Activated T-helper 1 cell treated with anti-CD3 and anti-CD28 coated beads, Interleukin-12 subunit alpha, Interleukin-12 subunit beta, Interleukin-2, Interleukin-4 antibody, amounts not matched to agents 30 ng/mL and 10 ng/mL and 1 ng/mL, durations not matched to agents 14 hours and 24 hours and 36 hours (primary cell): ENCODE measurements at regions of chr9 and their contacts with region 1.

Region 1: GRCh38 chr9:113614843-113615648 is 151.5 kb downstream of the RGS3 start:
- DNase-seq: no peak
- H3K4me3 Mint-ChIP-seq: peak overlapping the region; percentile 64
- H3K27ac Mint-ChIP-seq: peak overlapping the region; percentile 76
- H3K4me1 Mint-ChIP-seq: peaks cover 42% of the 10 kb centered on the region
- H3K27me3 Mint-ChIP-seq: peaks cover 2% of the 10 kb centered on the region

Region 2: GRCh38 chr9:113548221-113549041 is 66.6 kb before region 1 on chr9:
- intact Hi-C with region 1: loop called (anchors 2 kb)
- DNase-seq: no peak
- H3K4me3 Mint-ChIP-seq: peak overlapping the region; percentile 23
- H3K27ac Mint-ChIP-seq: peak overlapping the region; percentile 92
- H3K4me1 Mint-ChIP-seq: peaks cover 26% of the 10 kb centered on the region
- H3K27me3 Mint-ChIP-seq: no peaks in the 10 kb centered on the region

Region 3: DNA sequence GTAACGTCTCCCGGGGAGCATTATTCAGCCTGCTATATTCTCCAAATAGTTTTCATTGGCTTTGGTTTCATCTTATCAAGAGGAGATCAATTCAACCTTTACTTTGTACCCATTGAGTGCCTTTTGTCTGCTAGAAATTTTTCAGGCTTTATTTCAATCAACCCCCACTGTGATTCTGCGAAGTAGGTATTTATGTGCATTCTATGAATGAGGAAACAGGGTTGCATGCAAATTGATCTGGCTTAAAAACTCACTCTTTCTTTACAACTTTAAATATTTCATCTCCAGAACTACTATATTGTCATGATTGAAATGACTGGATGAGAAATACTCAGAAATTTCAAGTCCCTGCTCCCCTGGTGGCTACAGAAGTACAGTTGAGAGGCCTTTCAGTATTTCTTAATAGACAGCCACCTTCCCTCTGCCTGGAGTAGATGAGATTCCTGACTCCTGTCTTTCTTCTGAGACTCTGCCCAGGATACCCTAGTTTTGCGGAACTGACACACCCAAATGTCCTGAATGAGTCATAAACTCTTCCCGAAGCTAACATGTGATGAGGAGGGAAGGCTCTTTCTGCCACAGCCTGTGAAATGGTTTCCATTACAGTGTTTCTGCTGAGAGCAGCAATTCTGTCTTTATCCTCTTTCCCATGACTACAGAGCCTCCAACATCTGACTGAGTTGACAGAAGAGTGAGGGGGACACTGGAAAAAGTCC is 1555.5 kb after region 1 on chr9:
- intact Hi-C with region 1: no loop called
- DNase-seq: no peak
- H3K4me3 Mint-ChIP-seq: no peak overlapping the region
- H3K27ac Mint-ChIP-seq: no peak overlapping the region
- H3K4me1 Mint-ChIP-seq: no peaks in the 10 kb centered on the region
- H3K27me3 Mint-ChIP-seq: peaks cover 5% of the 10 kb centered on the region